ENCODE measurements at regions of chr18 and their contacts with region 1.

Region 1: GRCh38 chr18:58529714-58530354 is 99.1 kb downstream of the ALPK2 start:
- DNase-seq: peak; percentile 40 to 77 (median 62)
- ATAC-seq: peak; percentile 67 to 83 (median 78)
- H3K4me3 ChIP-seq: no peak overlapping the region
- H3K4me3 Mint-ChIP-seq: no peak overlapping the region
- H3K27ac ChIP-seq: no peak overlapping the region
- H3K27ac Mint-ChIP-seq: no peak overlapping the region
- H3K4me1 ChIP-seq: no peaks in the 10 kb centered on the region
- H3K4me1 Mint-ChIP-seq: peaks cover 7 to 10% (median 8%) of the 10 kb centered on the region in 3 donors
- H3K27me3 ChIP-seq: peaks cover 0 to 9% of the 10 kb centered on the region in 2 experiments
- H3K27me3 Mint-ChIP-seq: peaks cover 3 to 6% of the 10 kb centered on the region in 2 donors

Region 2: DNA sequence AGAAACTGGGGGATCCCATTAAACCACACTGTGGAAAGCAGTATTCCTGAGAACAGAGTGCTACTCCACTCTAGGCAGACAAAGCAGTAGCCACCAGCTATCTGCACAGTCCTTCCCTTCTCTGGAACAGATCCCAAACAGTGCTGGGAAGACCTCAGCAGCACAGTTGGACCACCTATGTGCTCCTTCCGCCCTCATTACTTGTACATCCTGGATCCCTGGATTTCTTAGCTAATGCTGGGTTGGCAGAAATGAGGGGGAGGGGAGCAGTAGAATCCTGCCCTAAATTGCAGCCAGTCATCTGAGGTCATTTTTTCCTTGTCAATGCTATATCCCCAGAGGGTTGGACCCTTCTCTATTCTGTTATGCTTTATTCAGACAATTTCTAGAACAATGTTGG is 127.7 kb after region 1 on chr18:
- CTCF ChIA-PET with region 1: interaction called in 1 of 2 experiments, 10 read pairs
- POLR2A ChIA-PET with region 1: no interaction called
- DNase-seq: no peak
- ATAC-seq: no peak
- H3K4me3 ChIP-seq: no peak overlapping the region
- H3K4me3 Mint-ChIP-seq: peak overlapping the region; percentile 60 to 71 (median 67)
- H3K27ac ChIP-seq: peak overlapping the region; percentile 75
- H3K27ac Mint-ChIP-seq: peak overlapping the region; percentile 88 to 94
- H3K4me1 ChIP-seq: peaks cover 22 to 35% of the 10 kb centered on the region in 2 experiments
- H3K4me1 Mint-ChIP-seq: peaks cover 72 to 85% (median 73%) of the 10 kb centered on the region in 3 donors
- H3K27me3 ChIP-seq: no peaks in the 10 kb centered on the region
- H3K27me3 Mint-ChIP-seq: no peaks in the 10 kb centered on the region

Region 3: DNA sequence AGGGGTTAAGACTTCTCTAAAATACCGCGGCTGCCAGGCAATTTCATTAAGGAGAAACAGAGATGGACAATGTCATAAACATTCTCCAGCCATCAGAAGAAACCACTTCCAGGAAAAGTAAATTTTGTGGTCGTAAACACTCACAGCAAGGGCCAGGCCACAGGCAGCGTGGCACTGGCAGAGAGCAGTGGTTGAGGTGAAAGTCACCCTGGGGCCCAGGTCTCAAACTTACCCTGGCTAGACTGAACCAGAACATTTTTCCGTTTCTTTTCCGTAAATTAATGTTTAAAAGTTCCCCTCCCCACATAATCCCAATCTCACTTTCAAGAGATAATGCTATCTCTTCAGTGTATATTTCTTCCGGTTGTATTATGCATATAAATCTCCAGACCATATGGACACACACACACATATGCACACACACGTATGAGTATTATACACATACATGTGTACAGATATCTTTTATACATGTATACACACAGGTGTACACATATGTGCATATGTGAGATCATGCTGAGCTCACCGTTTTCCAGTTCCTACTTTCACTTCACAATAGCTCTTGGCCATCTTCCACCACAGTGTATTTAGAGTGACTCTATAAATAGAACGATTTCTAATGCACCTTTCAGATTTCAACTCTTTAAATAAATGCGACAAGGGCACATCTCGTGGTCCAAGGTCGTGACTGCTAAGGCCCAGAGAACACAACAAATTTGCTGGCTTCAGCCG is 231.6 kb after region 1 on chr18:
- CTCF ChIA-PET with region 1: interaction called, 72 to 177 read pairs
- POLR2A ChIA-PET with region 1: interaction called in 1 of 2 experiments, 4 read pairs
- DNase-seq: no peak
- ATAC-seq: peak in 1 of 4 experiments; percentile 34
- H3K4me3 ChIP-seq: no peak overlapping the region
- H3K4me3 Mint-ChIP-seq: no peak overlapping the region
- H3K27ac ChIP-seq: no peak overlapping the region
- H3K27ac Mint-ChIP-seq: no peak overlapping the region
- H3K4me1 ChIP-seq: peaks cover 5 to 24% of the 10 kb centered on the region in 2 experiments
- H3K4me1 Mint-ChIP-seq: peaks cover 27 to 44% (median 43%) of the 10 kb centered on the region in 3 donors
- H3K27me3 ChIP-seq: peaks cover 0 to 23% of the 10 kb centered on the region in 2 experiments
- H3K27me3 Mint-ChIP-seq: peaks cover 20% of the 10 kb centered on the region in 2 donors

Measured in T-cell (primary cell).